Activated T-helper 1 cell treated with anti-CD3 and anti-CD28 coated beads, Interleukin-12 subunit alpha, Interleukin-12 subunit beta, Interleukin-2, Interleukin-4 antibody, amounts not matched to agents 30 ng/mL and 10 ng/mL and 1 ng/mL, durations not matched to agents 14 hours and 24 hours and 36 hours (primary cell): ENCODE measurements at regions of chr10 and their contacts with region 1.

Region 1: GRCh38 chr10:21184216-21184615 is 287.1 kb upstream of the NEBL start:
- DNase-seq: no peak
- H3K4me3 Mint-ChIP-seq: no peak overlapping the region
- H3K27ac Mint-ChIP-seq: no peak overlapping the region
- H3K4me1 Mint-ChIP-seq: no peaks in the 10 kb centered on the region
- H3K27me3 Mint-ChIP-seq: peaks cover 2% of the 10 kb centered on the region

Region 2: GRCh38 chr10:21100871-21101514 is 83.2 kb before region 1 on chr10:
- intact Hi-C with region 1: no loop called
- DNase-seq: no peak
- H3K4me3 Mint-ChIP-seq: no peak overlapping the region
- H3K27ac Mint-ChIP-seq: no peak overlapping the region
- H3K4me1 Mint-ChIP-seq: no peaks in the 10 kb centered on the region
- H3K27me3 Mint-ChIP-seq: no peaks in the 10 kb centered on the region

Region 3: DNA sequence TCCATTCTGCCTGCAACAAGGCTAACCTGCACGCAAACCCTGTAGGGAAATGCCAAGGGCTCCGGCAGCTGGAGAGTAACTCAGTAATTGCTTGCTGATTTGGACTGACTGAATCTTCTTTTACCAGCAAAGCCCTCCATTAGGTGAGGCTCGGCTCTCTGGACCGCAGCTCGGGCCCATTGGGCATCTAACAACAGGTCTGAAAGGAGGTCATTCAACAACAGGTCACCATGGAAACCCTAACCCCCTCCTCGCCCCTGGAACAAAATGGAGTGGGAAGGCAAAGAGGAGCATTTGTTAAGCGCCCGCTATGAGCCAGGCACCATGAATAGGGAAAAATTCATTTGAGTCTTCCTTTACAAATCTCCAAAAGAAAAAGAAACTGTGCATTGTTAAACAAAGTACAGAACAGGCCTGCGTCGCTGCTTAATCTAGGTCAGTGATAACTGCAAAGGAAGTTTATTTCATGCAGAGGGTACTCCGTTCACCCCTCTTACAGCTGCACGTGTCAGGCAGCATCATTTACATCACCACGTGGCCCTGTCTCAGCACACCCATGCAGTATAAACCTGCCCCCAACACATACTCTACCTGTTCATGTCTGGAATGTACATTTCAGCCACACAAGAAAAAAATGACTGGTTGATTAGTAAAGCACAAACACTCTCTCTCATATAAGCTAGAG is 38.3 kb before region 1 on chr10:
- intact Hi-C with region 1: loop called (anchors 1 kb)
- DNase-seq: no peak
- H3K4me3 Mint-ChIP-seq: no peak overlapping the region
- H3K27ac Mint-ChIP-seq: no peak overlapping the region
- H3K4me1 Mint-ChIP-seq: no peaks in the 10 kb centered on the region
- H3K27me3 Mint-ChIP-seq: no peaks in the 10 kb centered on the region